Adrenal gland (tissue), 19 donors: ENCODE measurements at regions of chr16 and their contacts with region 1.

Region 1: GRCh38 chr16:66483689-66484481 is 56.8 kb downstream of the BEAN1 start:
- DNase-seq: peak; percentile 67 to 86 (median 79)
- H3K4me3 ChIP-seq: no peak overlapping the region
- H3K27ac ChIP-seq: no peak overlapping the region
- H3K4me1 ChIP-seq: peaks cover 0 to 11% of the 10 kb centered on the region in 2 donors
- H3K27me3 ChIP-seq: no peaks in the 10 kb centered on the region
- CTCF ChIP-seq: peak; percentile 86 to 91 (median 88)
- POLR2A ChIP-seq: no peak

Region 2: DNA sequence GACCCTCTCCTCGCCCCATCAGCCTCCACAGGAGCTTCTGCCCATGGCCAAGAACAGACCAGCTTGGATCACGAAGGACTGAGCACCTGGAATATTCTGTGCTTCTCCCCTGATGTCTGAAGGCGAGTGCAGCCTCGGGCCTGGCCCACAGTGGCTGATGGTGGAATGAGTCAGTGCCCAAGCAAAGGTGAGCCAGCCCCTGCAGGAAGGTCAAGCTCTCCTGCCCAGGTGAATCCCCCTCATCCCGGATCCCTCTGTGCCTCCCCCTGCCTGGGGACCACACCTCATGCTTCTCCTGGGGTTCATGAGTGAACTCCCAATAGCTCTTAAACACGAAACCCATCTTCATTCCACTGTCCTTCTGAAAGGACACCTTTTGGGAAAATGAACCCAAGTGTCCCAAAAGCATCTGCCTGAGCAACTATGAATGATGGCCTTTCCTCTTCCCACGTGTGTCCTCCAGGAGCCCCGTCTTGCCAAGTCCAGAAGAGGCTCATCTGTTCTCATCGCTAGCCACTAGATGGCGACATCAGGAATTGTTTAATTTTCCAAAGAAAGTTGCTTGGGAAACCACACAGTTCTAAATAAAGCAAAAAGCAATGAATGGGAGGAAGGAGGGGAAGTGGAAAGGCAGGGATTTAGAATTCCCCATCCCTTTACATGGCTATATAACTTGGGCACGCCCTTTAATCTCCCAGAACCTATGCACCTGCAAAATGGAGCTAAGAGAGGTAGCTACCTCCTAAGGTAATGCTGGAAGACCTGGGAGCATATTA is 126.5 kb before region 1 on chr16:
- intact Hi-C with region 1: loop called in 1 of 2 experiments (anchors 5 kb)
- DNase-seq: peak; percentile 42 to 82 (median 68)
- H3K4me3 ChIP-seq: no peak overlapping the region
- H3K27ac ChIP-seq: no peak overlapping the region
- H3K4me1 ChIP-seq: no peaks in the 10 kb centered on the region
- H3K27me3 ChIP-seq: peaks cover 3% of the 10 kb centered on the region
- CTCF ChIP-seq: peak; percentile 55 to 70 (median 59)
- POLR2A ChIP-seq: no peak